CD14-positive monocyte (primary cell): ENCODE measurements at regions of chr17 and their contacts with region 1.

Region 1: GRCh38 chr17:75405365-75406221 is at the start of gene GRB2:
- DNase-seq: peak; percentile 96 to 97 (median 97)
- H3K4me3 ChIP-seq: peak within 1 kb of the TSS; percentile 88 to 100 (median 93)
- H3K4me3 Mint-ChIP-seq: peak within 1 kb of the TSS; percentile 98 to 99
- H3K27ac ChIP-seq: peak within 1 kb of the TSS; percentile 91 to 95
- H3K27ac Mint-ChIP-seq: peak within 1 kb of the TSS; percentile 97 to 100 (median 98)
- H3K4me1 ChIP-seq: peaks cover 40 to 43% of the 10 kb centered on the region in 2 donors
- H3K4me1 Mint-ChIP-seq: peaks cover 37% of the 10 kb centered on the region
- H3K27me3 ChIP-seq: no peaks in the 10 kb centered on the region
- H3K27me3 Mint-ChIP-seq: peaks cover 0 to 4% (median 0%) of the 10 kb centered on the region in 3 donors
- CTCF ChIP-seq: no peak
- polyA plus RNA-seq, gene GRB2: 164 to 338 (median 262) TPM

Region 2: GRCh38 chr17:75271233-75271954 is 134.2 kb before region 1 on chr17:
- intact Hi-C with region 1: loop called in 1 of 2 experiments (anchors 5 kb)
- DNase-seq: peak; percentile 78 to 89 (median 88)
- H3K4me3 ChIP-seq: peak overlapping the region; percentile 71 to 92 (median 83)
- H3K4me3 Mint-ChIP-seq: peak overlapping the region; percentile 72 to 87
- H3K27ac ChIP-seq: peak overlapping the region; percentile 52 to 90
- H3K27ac Mint-ChIP-seq: peak overlapping the region; percentile 36 to 81 (median 70)
- H3K4me1 ChIP-seq: peaks cover 54 to 59% of the 10 kb centered on the region in 2 donors
- H3K4me1 Mint-ChIP-seq: peaks cover 54% of the 10 kb centered on the region
- H3K27me3 ChIP-seq: no peaks in the 10 kb centered on the region
- H3K27me3 Mint-ChIP-seq: peaks cover 0 to 2% (median 0%) of the 10 kb centered on the region in 3 donors
- CTCF ChIP-seq: peak; percentile 79

Region 3: DNA sequence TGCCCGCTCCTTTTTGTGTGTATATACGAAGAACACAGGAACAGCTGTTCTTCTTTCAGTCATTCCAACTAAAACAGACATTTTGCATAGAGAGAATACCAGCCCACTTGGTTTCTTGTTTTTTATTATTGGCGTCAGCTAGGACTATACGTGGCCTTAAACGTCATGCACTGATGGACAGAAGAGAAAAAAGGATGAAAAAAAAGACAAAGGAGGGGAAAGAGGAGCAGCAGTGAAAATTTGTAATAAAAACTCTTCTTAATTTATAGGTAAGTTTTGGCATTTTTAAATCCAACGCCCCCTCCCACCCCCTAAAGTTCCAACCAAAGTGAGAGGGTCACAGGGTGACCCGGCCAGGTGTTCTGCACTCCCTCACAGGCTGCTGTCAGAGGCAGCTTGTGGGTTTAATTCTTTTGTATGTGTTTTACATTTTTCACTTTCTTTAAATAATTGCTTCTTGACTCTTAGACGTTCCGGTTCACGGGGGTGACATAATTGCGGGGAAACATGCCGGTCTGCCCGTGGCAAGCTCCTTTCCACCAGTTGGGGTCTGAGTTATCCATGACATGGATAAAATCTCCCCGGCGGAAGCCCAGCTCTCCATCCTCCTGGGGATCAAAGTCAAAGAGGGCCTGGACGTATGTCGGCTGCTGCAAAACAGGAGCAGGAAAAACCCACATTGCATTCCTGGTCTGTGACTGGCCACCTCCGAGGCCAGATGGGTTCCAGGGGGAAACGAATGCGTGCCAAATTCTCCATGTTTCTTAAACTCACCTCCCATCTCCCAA is 85.5 kb before region 1 on chr17:
- intact Hi-C with region 1: loop called in 1 of 2 experiments (anchors 2 kb)
- DNase-seq: no peak
- H3K4me3 ChIP-seq: no peak overlapping the region
- H3K4me3 Mint-ChIP-seq: no peak overlapping the region
- H3K27ac ChIP-seq: peak overlapping the region in 1 of 2 donors; percentile 100
- H3K27ac Mint-ChIP-seq: peak overlapping the region; percentile 11 to 63 (median 54)
- H3K4me1 ChIP-seq: peaks cover 56 to 65% of the 10 kb centered on the region in 2 donors
- H3K4me1 Mint-ChIP-seq: peaks cover 54% of the 10 kb centered on the region
- H3K27me3 ChIP-seq: no peaks in the 10 kb centered on the region
- H3K27me3 Mint-ChIP-seq: peaks cover 0 to 1% (median 0%) of the 10 kb centered on the region in 3 donors
- CTCF ChIP-seq: no peak